CD4-positive, alpha-beta T cell (primary cell): ENCODE measurements at regions of chr19 and their contacts with region 1.

Region 1: GRCh38 chr19:45569619-45570421 is 14.8 kb downstream of the OPA3 start:
- DNase-seq: peak; percentile 27 to 72 (median 48)
- ATAC-seq: peak; percentile 62
- H3K4me3 ChIP-seq: no peak overlapping the region
- H3K4me3 Mint-ChIP-seq: no peak overlapping the region
- H3K27ac ChIP-seq: no peak overlapping the region
- H3K27ac Mint-ChIP-seq: no peak overlapping the region
- H3K4me1 ChIP-seq: peaks cover 3% of the 10 kb centered on the region
- H3K4me1 Mint-ChIP-seq: peaks cover 13% of the 10 kb centered on the region
- H3K27me3 ChIP-seq: no peaks in the 10 kb centered on the region
- H3K27me3 Mint-ChIP-seq: no peaks in the 10 kb centered on the region
- CTCF ChIP-seq: peak; percentile 67

Region 2: GRCh38 chr19:45323671-45324081 is 246.1 kb before region 1 on chr19:
- CTCF ChIA-PET with region 1: no interaction called
- POLR2A ChIA-PET with region 1: no interaction called
- intact Hi-C with region 1: no loop called
- DNase-seq: no peak
- ATAC-seq: no peak
- H3K4me3 ChIP-seq: no peak overlapping the region
- H3K4me3 Mint-ChIP-seq: no peak overlapping the region
- H3K27ac ChIP-seq: no peak overlapping the region
- H3K27ac Mint-ChIP-seq: no peak overlapping the region
- H3K4me1 ChIP-seq: peaks cover 6% of the 10 kb centered on the region
- H3K4me1 Mint-ChIP-seq: no peaks in the 10 kb centered on the region
- H3K27me3 ChIP-seq: peaks cover 19 to 38% of the 10 kb centered on the region in 2 experiments
- H3K27me3 Mint-ChIP-seq: peaks cover 21% of the 10 kb centered on the region
- CTCF ChIP-seq: no peak

Region 3: DNA sequence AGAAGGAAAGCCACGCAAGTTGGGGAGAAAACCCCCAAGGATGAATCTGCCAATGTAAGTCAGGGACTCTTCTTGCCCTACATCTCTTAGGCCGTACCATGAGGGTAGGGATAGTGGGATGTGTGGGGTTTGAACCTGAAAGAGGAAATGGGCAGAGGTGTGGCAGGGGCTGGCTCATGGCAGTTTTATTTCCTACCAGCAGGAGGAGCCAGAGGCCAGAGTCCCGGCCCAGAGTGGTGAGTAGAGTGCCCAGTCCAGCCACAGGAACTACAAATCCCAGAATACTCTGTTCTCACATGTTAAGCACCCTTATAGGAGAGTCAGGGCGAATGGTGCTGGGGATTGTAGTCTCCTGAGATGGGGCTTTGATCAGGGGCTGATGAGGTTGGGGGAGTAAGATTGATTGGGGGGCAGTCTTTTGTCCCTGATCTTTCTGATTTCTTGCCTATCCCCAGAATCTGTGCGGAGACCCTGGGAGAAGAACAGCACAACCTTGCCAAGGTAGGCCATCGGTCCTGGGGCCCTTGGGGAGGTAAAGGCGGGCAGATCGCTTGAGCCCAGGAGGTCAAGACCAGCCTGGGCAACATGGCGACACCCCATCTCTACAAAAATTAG is 46.1 kb before region 1 on chr19:
- CTCF ChIA-PET with region 1: no interaction called
- POLR2A ChIA-PET with region 1: no interaction called
- intact Hi-C with region 1: loop called (anchors 1 to 2 kb)
- DNase-seq: peak; percentile 54 to 92 (median 66)
- ATAC-seq: peak; percentile 99
- H3K4me3 ChIP-seq: no peak overlapping the region
- H3K4me3 Mint-ChIP-seq: no peak overlapping the region
- H3K27ac ChIP-seq: no peak overlapping the region
- H3K27ac Mint-ChIP-seq: peak overlapping the region; percentile 53
- H3K4me1 ChIP-seq: peaks cover 11% of the 10 kb centered on the region
- H3K4me1 Mint-ChIP-seq: peaks cover 19% of the 10 kb centered on the region
- H3K27me3 ChIP-seq: no peaks in the 10 kb centered on the region
- H3K27me3 Mint-ChIP-seq: no peaks in the 10 kb centered on the region
- CTCF ChIP-seq: peak; percentile 76